ENCODE measurements at regions of chr6 and their contacts with region 1.

Region 1: GRCh38 chr6:37169496-37170272 is at the start of gene PIM1:
- DNase-seq: peak; percentile 100
- H3K4me3 Mint-ChIP-seq: peak within 1 kb of the TSS; percentile 90
- H3K27ac Mint-ChIP-seq: peak within 1 kb of the TSS; percentile 97
- H3K4me1 Mint-ChIP-seq: peaks cover 32% of the 10 kb centered on the region
- H3K27me3 Mint-ChIP-seq: no peaks in the 10 kb centered on the region
- total RNA-seq, gene PIM1: 204 TPM

Region 2: DNA sequence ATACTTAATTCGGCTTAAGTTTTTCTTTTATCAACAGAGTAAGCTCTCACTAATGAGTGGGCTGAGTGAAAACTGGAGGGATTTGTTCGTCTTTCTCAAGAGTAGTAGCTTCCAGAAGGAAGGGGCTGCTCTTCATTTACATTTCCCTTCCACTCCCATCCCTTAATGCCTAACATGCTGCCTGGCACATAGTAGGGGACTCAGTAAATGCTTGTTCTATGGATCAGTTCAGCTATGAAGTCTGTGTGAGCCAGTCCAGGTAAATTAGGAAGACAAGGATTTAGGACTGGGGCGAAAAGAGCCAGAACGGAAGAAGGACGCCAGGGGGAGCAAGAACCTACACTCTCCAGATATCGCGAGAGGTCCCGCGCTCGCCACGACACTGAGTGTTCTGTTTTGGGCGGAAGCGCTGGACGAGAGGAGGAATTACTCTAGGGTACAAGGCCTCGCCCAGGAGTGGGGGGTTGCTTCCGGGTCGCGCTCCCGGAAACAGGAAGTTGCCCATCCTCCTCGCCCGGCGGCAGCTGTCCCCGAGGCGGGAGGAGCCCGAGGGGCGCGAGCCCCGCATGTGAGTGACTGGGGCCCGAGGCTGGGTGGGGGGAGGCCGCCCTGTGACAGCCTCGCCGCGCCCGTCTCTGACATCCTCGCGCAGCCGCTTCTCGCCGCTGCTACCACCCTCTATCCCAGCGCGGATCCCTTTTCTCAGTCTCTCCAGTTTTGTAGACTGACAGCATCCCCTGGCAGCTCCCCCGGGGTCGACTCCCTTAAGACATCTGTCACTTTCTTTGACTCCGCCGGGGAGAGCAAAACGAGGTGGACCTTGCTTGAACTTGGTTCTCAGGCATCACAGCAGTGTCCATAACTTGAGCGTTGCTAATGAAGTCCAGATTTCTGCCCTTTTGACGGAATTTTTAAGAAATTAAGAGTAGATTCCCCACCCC is 284.0 kb before region 1 on chr6 and contains the start of gene C6orf89:
- CTCF ChIA-PET with region 1: interaction called, 7 read pairs
- POLR2A ChIA-PET with region 1: no interaction called
- intact Hi-C with region 1: loop called (anchors 2 kb)
- DNase-seq: peak; percentile 98
- H3K4me3 Mint-ChIP-seq: peak within 1 kb of the TSS; percentile 88
- H3K27ac Mint-ChIP-seq: peak within 1 kb of the TSS; percentile 92
- H3K4me1 Mint-ChIP-seq: peaks cover 36% of the 10 kb centered on the region
- H3K27me3 Mint-ChIP-seq: no peaks in the 10 kb centered on the region
- total RNA-seq, gene C6orf89: 29.2 to 29.8 TPM

Region 3: GRCh38 chr6:37102279-37103168 is 67.2 kb before region 1 on chr6:
- CTCF ChIA-PET with region 1: interaction called, 16 read pairs
- POLR2A ChIA-PET with region 1: interaction called, 19 read pairs
- intact Hi-C with region 1: no loop called
- DNase-seq: peak; percentile 87
- H3K4me3 Mint-ChIP-seq: peak overlapping the region; percentile 65
- H3K27ac Mint-ChIP-seq: peak overlapping the region; percentile 79
- H3K4me1 Mint-ChIP-seq: peaks cover 30% of the 10 kb centered on the region
- H3K27me3 Mint-ChIP-seq: no peaks in the 10 kb centered on the region

Region 4: GRCh38 chr6:37155394-37156312 is 14.0 kb before region 1 on chr6:
- CTCF ChIA-PET with region 1: interaction called, 7 read pairs
- POLR2A ChIA-PET with region 1: interaction called, 7 read pairs
- intact Hi-C with region 1: loop called (anchors 1 kb)
- DNase-seq: peak; percentile 90
- H3K4me3 Mint-ChIP-seq: peak overlapping the region; percentile 48
- H3K27ac Mint-ChIP-seq: peak overlapping the region; percentile 83
- H3K4me1 Mint-ChIP-seq: peaks cover 41% of the 10 kb centered on the region
- H3K27me3 Mint-ChIP-seq: no peaks in the 10 kb centered on the region

Region 5: GRCh38 chr6:37207903-37208456 is 38.3 kb after region 1 on chr6:
- CTCF ChIA-PET with region 1: interaction called, 283 read pairs
- POLR2A ChIA-PET with region 1: interaction called, 13 read pairs
- intact Hi-C with region 1: loop called (anchors 1 kb)
- DNase-seq: peak; percentile 95
- H3K4me3 Mint-ChIP-seq: no peak overlapping the region
- H3K27ac Mint-ChIP-seq: peak overlapping the region; percentile 69
- H3K4me1 Mint-ChIP-seq: peaks cover 63% of the 10 kb centered on the region
- H3K27me3 Mint-ChIP-seq: no peaks in the 10 kb centered on the region

Measured in activated CD4-positive, alpha-beta memory T cell treated with anti-CD3 and anti-CD28 coated beads for 36 hours (primary cell).